ENCODE measurements at regions of chr15 and their contacts with region 1.

Region 1: DNA sequence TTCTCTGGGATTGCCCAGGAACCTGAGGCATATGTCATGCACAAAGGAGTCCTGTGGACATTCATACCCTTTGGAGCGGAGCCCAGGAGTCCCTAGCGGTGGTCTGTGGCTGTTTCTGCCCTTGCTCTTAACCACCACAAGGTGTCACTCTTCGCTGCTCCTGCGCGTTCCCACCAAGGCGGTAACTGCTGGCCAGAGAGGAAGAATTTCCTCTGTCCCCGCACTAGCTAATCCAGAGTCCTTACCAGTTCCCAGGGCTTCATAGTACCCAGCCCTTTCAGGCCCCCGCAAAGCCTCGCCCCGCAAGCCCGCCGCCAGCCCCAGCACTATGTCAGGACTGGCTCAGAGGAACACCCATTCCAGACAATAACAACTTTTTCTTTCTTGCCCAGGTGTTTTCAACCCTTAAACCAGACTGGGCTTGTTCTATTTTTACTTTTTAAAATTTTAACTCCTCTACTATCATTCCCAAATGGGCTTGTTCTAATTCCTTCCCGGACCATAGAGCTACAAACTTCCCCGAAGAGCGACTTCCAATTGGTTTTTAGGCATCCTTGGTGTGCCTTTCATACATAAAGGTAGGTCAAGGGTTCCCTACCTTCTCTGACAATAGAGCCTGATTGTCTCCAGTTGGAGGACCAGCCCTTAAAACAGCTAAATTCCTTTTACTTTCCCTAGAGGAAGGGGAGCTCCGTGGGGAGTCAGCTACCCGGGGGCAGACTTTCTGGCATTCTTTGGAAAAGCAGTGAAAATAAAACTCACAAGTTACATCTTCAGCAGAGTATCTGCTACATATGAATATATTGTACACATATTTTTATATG is 31.8 kb upstream of the ZNF774 start:
- DNase-seq: peak; percentile 95

Region 2: DNA sequence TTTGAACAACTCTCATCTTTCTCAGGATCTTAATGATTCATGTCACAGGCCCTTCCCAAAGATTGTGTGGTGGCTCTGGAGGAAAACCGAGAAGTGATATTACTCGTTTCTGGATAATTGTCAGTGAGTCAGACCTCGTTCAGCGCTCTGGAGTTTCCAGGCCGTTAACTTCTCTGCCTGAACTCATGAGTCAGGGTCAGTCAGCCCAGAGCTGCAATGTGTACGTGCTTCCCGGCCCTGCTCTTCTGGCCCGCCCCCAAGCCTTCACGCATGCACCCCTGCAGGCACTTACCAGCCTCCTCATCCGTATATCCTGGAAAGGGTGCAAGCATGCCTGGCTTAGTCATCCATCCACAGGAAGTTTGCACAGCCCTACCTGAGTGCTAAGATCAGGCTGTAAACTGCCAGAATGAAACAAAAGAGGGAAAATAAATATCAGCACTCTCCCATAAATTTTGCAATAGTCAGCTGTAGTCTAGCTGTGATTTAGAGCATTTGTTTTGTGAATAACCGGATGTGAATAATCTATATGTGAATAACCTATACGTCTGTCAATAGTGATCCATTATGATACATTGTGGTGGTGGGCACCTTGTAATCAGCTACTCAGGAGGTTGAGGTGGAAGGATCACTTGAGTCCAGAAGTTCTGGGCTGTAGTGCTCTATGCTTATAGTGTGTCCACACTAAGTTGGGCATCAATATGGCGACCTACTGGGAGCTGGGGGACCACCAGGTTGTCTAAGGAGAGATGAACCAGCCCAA is 154.4 kb before region 1 on chr15:
- CTCF ChIA-PET with region 1: no interaction called
- POLR2A ChIA-PET with region 1: no interaction called
- DNase-seq: peak; percentile 67

Region 3: GRCh38 chr15:90336705-90337141 is 16.4 kb after region 1 on chr15:
- CTCF ChIA-PET with region 1: interaction called, 20 read pairs
- POLR2A ChIA-PET with region 1: interaction called, 3 read pairs
- DNase-seq: no peak

Region 4: GRCh38 chr15:90436952-90437351 is 116.7 kb after region 1 on chr15:
- CTCF ChIA-PET with region 1: no interaction called
- POLR2A ChIA-PET with region 1: no interaction called
- DNase-seq: no peak

Region 5: GRCh38 chr15:90482124-90483011 is 162.1 kb after region 1 on chr15:
- CTCF ChIA-PET with region 1: interaction called, 54 read pairs
- POLR2A ChIA-PET with region 1: interaction called, 10 read pairs
- DNase-seq: peak; percentile 62

Measured in HEK293T (cell line).